ENCODE measurements at regions of chr10 and their contacts with region 1.

Region 1: GRCh38 chr10:127990846-127991542 is 84.1 kb downstream of the PTPRE start:
- DNase-seq: peak; percentile 42
- H3K4me3 Mint-ChIP-seq: peak overlapping the region; percentile 54
- H3K27ac Mint-ChIP-seq: peak overlapping the region; percentile 94
- H3K4me1 Mint-ChIP-seq: peaks cover 32% of the 10 kb centered on the region
- H3K27me3 Mint-ChIP-seq: no peaks in the 10 kb centered on the region
- CTCF ChIP-seq: no peak

Region 2: GRCh38 chr10:127577376-127577775 is 413.6 kb before region 1 on chr10:
- CTCF ChIA-PET with region 1: no interaction called
- intact Hi-C with region 1: no loop called
- DNase-seq: no peak
- H3K4me3 Mint-ChIP-seq: no peak overlapping the region
- H3K27ac Mint-ChIP-seq: no peak overlapping the region
- H3K4me1 Mint-ChIP-seq: no peaks in the 10 kb centered on the region
- H3K27me3 Mint-ChIP-seq: peaks cover 20% of the 10 kb centered on the region
- CTCF ChIP-seq: no peak

Region 3: GRCh38 chr10:127922675-127923366 is 68.2 kb before region 1 on chr10:
- CTCF ChIA-PET with region 1: no interaction called
- intact Hi-C with region 1: no loop called
- DNase-seq: peak; percentile 73
- H3K4me3 Mint-ChIP-seq: no peak overlapping the region
- H3K27ac Mint-ChIP-seq: peak overlapping the region; percentile 58
- H3K4me1 Mint-ChIP-seq: peaks cover 19% of the 10 kb centered on the region
- H3K27me3 Mint-ChIP-seq: no peaks in the 10 kb centered on the region
- CTCF ChIP-seq: no peak

Region 4: DNA sequence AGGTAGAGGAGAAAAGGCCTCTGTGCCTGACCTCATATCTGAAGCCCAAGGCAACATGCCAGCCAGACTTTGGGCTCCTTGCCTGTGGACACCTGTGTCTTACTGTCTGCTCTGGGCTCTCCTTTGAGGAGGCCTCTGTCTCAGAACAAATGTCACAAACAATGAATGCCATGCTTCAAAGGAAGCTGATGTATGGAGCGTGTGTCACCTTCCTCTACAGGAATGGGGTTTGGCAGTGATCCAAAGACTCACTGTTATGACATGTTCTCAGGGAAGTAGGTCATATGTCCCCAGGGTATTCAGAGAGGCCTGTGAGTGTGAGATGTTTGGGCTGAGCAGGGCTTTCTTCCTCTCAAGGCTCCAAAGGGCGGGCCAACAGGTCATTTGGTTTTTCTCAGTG is 45.7 kb before region 1 on chr10:
- CTCF ChIA-PET with region 1: no interaction called
- intact Hi-C with region 1: loop called (anchors 1 kb)
- DNase-seq: peak; percentile 69
- H3K4me3 Mint-ChIP-seq: no peak overlapping the region
- H3K27ac Mint-ChIP-seq: peak overlapping the region; percentile 39
- H3K4me1 Mint-ChIP-seq: peaks cover 32% of the 10 kb centered on the region
- H3K27me3 Mint-ChIP-seq: no peaks in the 10 kb centered on the region
- CTCF ChIP-seq: no peak

Region 5: GRCh38 chr10:128230401-128230800 is 239.4 kb after region 1 on chr10:
- CTCF ChIA-PET with region 1: no interaction called
- intact Hi-C with region 1: loop called (anchors 5 kb)
- DNase-seq: no peak
- H3K4me3 Mint-ChIP-seq: no peak overlapping the region
- H3K27ac Mint-ChIP-seq: no peak overlapping the region
- H3K4me1 Mint-ChIP-seq: no peaks in the 10 kb centered on the region
- H3K27me3 Mint-ChIP-seq: peaks cover 39% of the 10 kb centered on the region
- CTCF ChIP-seq: no peak

Measured in Calu3 (cell line).